Right ventricle myocardium superior (tissue), 1 donor: ENCODE measurements at regions of chr11 and their contacts with region 1.

Region 1: GRCh38 chr11:66592457-66593302 is at the starts of genes CCDC87 and CCS:
- DNase-seq: peak; percentile 100
- ATAC-seq: peak; percentile 99
- total RNA-seq, gene CCDC87: 0.24 TPM
- total RNA-seq, gene CCS: 25.8 TPM

Region 2: GRCh38 chr11:66616379-66617154 is 23.9 kb after region 1 on chr11 and contains the start of gene RBM14:
- intact Hi-C with region 1: loop called (anchors 2 kb)
- DNase-seq: peak; percentile 99
- ATAC-seq: peak; percentile 94
- total RNA-seq, gene RBM14: 28.7 TPM